ENCODE measurements at regions of chr6 and their contacts with region 1.

Region 1: DNA sequence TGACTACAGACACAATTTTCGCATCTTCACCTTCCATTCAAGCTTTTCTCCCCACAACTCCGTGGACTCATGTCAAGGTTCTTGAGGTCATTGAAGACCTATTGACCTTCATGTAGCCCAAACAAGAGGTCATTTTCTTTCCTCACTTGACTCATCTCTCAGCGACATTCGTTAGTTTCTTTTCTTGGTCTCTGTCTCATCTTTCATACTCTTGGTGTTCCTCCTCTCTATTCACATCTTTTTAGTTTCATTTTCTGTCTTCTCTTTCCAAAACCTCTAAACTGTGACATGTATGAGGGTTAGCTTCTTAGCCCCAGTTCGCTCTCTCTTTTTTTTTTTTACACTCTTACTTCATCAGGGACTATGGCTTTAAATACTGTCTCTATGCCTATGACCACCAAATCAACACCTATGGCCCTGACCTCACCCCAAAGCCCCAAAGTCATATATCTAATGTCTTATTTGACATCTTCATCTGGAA is 128.6 kb upstream of the BACH2 start:
- DNase-seq: peak; percentile 34
- ATAC-seq: peak; percentile 93
- H3K4me3 Mint-ChIP-seq: peak overlapping the region; percentile 49
- H3K27ac Mint-ChIP-seq: peak overlapping the region; percentile 94
- H3K4me1 Mint-ChIP-seq: peaks cover 34% of the 10 kb centered on the region
- H3K27me3 Mint-ChIP-seq: no peaks in the 10 kb centered on the region

Region 2: DNA sequence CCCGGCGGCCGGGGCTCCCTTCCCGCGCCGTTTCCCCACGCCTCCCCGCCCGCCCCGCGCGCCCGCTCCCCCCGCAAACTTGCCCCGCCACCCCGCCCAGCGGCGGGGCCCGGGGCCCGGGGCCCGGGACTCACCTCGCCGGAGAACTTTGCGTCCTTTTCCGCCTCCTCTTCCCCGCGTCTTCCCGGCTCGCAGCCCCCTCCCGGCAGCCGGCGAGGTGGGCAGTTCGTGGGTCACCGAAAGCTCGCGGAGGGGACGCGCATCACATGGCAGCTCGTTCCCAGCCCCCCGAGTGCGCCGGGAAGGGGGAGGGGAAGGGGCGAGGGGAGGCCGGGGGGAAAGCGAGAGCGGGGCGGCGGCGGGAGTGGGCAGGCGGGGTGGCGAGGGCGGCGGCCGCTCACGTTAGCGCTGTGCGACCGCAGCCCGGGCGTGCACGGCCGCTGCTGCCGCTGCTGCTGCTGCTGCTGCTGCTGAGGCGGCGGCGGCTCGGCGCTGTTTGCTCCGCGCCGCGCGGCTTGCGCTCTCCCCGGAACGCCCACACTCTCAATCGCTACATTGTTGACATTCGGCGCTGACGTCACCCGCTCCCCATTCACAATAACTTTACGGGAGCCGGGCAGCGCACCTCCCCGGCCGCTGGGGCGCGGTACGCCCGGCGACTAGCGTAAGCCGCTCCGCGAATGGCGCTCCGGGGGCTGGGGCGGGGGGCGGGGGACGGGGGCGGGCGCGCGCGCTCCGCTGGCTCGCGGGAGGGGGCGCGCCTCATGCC is 128.7 kb before region 1 on chr6 and contains the start of gene BACH2:
- CTCF ChIA-PET with region 1: interaction called, 3 read pairs
- POLR2A ChIA-PET with region 1: interaction called, 3 read pairs
- intact Hi-C with region 1: loop called in 1 of 2 experiments (anchors 1 kb)
- DNase-seq: peak; percentile 99
- ATAC-seq: peak; percentile 66
- H3K4me3 Mint-ChIP-seq: peak within 1 kb of the TSS; percentile 86
- H3K27ac Mint-ChIP-seq: peak within 1 kb of the TSS; percentile 100
- H3K4me1 Mint-ChIP-seq: peaks cover 49% of the 10 kb centered on the region
- H3K27me3 Mint-ChIP-seq: peaks cover 7% of the 10 kb centered on the region
- total RNA-seq, gene BACH2: 74.7 to 87.3 TPM

Region 3: GRCh38 chr6:90444160-90444714 is 19.0 kb after region 1 on chr6:
- CTCF ChIA-PET with region 1: interaction called, 12 read pairs
- POLR2A ChIA-PET with region 1: interaction called, 8 read pairs
- intact Hi-C with region 1: loop called (anchors 1 kb)
- DNase-seq: no peak
- ATAC-seq: peak; percentile 42
- H3K4me3 Mint-ChIP-seq: peak overlapping the region; percentile 20
- H3K27ac Mint-ChIP-seq: peak overlapping the region; percentile 99
- H3K4me1 Mint-ChIP-seq: peaks cover 58% of the 10 kb centered on the region
- H3K27me3 Mint-ChIP-seq: no peaks in the 10 kb centered on the region

Region 4: GRCh38 chr6:90466154-90466940 is 41.1 kb after region 1 on chr6:
- CTCF ChIA-PET with region 1: interaction called, 11 read pairs
- POLR2A ChIA-PET with region 1: interaction called, 10 read pairs
- intact Hi-C with region 1: loop called (anchors 2 kb)
- DNase-seq: peak; percentile 68
- ATAC-seq: peak; percentile 74
- H3K4me3 Mint-ChIP-seq: peak overlapping the region; percentile 48
- H3K27ac Mint-ChIP-seq: peak overlapping the region; percentile 93
- H3K4me1 Mint-ChIP-seq: peaks cover 97% of the 10 kb centered on the region
- H3K27me3 Mint-ChIP-seq: peaks cover 2% of the 10 kb centered on the region

Region 5: DNA sequence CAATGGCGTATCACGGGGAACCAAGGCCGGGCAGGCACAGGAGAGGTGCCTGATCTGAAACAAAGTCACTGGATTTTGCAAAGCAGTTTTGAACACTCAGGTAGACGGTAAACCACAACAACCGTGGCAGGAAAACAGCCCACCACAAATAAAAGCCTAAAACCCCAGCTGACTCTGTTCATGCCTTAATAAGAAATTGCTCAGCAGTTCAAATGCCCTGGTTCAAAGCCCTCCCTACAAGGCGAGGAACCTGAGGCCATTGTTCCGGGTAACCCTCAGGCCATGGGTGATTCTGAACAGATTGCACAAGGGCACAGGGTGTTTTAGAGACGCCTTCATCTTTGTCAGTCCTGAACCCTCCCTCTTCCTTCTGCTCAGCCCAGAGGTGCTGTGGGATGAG is 47.5 kb after region 1 on chr6:
- CTCF ChIA-PET with region 1: interaction called, 29 read pairs
- POLR2A ChIA-PET with region 1: interaction called, 7 read pairs
- intact Hi-C with region 1: loop called (anchors 1 to 2 kb)
- DNase-seq: peak; percentile 51
- ATAC-seq: peak; percentile 9
- H3K4me3 Mint-ChIP-seq: peak overlapping the region; percentile 58
- H3K27ac Mint-ChIP-seq: peak overlapping the region; percentile 77
- H3K4me1 Mint-ChIP-seq: peaks cover 99% of the 10 kb centered on the region
- H3K27me3 Mint-ChIP-seq: peaks cover 2% of the 10 kb centered on the region

Region 6: DNA sequence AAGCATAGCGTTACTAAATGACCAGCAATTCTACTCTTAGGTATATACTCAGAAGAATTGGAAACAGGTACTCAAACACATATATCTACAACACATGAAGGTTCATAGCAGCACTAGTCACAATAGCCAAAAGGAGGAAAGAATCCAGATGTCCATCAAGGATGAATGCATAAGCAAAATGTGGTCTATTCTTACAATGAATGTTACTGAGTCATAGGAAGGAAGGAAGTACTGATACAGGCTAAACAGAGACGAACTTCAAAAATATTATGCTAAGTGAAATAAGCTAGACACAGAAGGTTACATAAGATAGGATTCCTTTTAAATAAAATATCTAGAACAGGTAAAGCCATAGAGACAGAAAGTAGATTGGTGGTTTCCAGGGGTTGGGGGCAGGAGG is 68.1 kb after region 1 on chr6:
- CTCF ChIA-PET with region 1: no interaction called
- POLR2A ChIA-PET with region 1: no interaction called
- intact Hi-C with region 1: no loop called
- DNase-seq: no peak
- ATAC-seq: peak; percentile 51
- H3K4me3 Mint-ChIP-seq: no peak overlapping the region
- H3K27ac Mint-ChIP-seq: no peak overlapping the region
- H3K4me1 Mint-ChIP-seq: peaks cover 6% of the 10 kb centered on the region
- H3K27me3 Mint-ChIP-seq: peaks cover 6% of the 10 kb centered on the region

Region 7: GRCh38 chr6:90811596-90812226 is 386.5 kb after region 1 on chr6:
- CTCF ChIA-PET with region 1: no interaction called
- POLR2A ChIA-PET with region 1: no interaction called
- intact Hi-C with region 1: no loop called
- DNase-seq: no peak
- ATAC-seq: no peak
- H3K4me3 Mint-ChIP-seq: no peak overlapping the region
- H3K27ac Mint-ChIP-seq: no peak overlapping the region
- H3K4me1 Mint-ChIP-seq: no peaks in the 10 kb centered on the region
- H3K27me3 Mint-ChIP-seq: peaks cover under 1% of the 10 kb centered on the region